Dendritic cell treated with granulocyte-macrophage colony-stimulating factor and Interleukin-4, amounts not matched to agents 40 ng/mL and 50 ng/mL, for 4 days (primary cell): ENCODE measurements at regions of chr2 and their contacts with region 1.

Region 1: DNA sequence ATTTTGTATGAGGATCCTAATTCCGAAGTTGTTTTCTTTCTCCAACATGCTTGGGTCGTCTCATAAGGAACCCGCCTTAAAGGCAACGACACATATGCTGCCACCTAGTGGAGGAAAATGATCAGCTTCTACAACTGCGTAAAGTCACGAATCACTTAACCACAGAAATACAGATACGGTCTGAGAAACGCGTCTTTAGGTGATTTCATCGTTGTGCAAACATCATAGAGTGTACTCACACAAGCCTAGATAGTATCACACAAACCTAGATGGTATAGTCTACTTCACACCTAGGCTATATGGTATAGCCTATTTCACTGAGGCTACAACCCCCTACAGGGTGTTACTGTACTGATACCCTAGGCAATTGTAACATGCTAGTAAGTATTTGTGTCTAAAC is 13.1 kb downstream of the GNLY start:
- H3K4me3 Mint-ChIP-seq: no peak overlapping the region
- H3K27ac Mint-ChIP-seq: peak overlapping the region; percentile 86
- H3K4me1 Mint-ChIP-seq: peaks cover 87% of the 10 kb centered on the region
- H3K27me3 Mint-ChIP-seq: no peaks in the 10 kb centered on the region

Region 2: GRCh38 chr2:85678794-85679672 is 28.3 kb before region 1 on chr2:
- intact Hi-C with region 1: loop called (anchors 5 kb)
- H3K4me3 Mint-ChIP-seq: no peak overlapping the region
- H3K27ac Mint-ChIP-seq: no peak overlapping the region
- H3K4me1 Mint-ChIP-seq: peaks cover 39% of the 10 kb centered on the region
- H3K27me3 Mint-ChIP-seq: peaks cover 2% of the 10 kb centered on the region

Region 3: GRCh38 chr2:85741833-85742455 is 34.6 kb after region 1 on chr2:
- intact Hi-C with region 1: no loop called
- H3K4me3 Mint-ChIP-seq: no peak overlapping the region
- H3K27ac Mint-ChIP-seq: peak overlapping the region; percentile 24
- H3K4me1 Mint-ChIP-seq: peaks cover 46% of the 10 kb centered on the region
- H3K27me3 Mint-ChIP-seq: peaks cover 78% of the 10 kb centered on the region

Region 4: GRCh38 chr2:85888684-85889626 is 181.7 kb after region 1 on chr2 and contains the start of gene ST3GAL5:
- intact Hi-C with region 1: no loop called
- H3K4me3 Mint-ChIP-seq: peak within 1 kb of the TSS; percentile 84
- H3K27ac Mint-ChIP-seq: peak within 1 kb of the TSS; percentile 98
- H3K4me1 Mint-ChIP-seq: peaks cover 74% of the 10 kb centered on the region
- H3K27me3 Mint-ChIP-seq: no peaks in the 10 kb centered on the region